K562 (cell line): ENCODE measurements at regions of chr2 and their contacts with region 1.

Region 1: GRCh38 chr2:229921892-229922445 is at the start of gene TRIP12:
- DNase-seq: peak; percentile 79 to 89 (median 86)
- ATAC-seq: peak; percentile 81
- H3K4me3 ChIP-seq: peak within 1 kb of the TSS; percentile 90
- H3K27ac ChIP-seq: peak within 1 kb of the TSS; percentile 90
- H3K4me1 ChIP-seq: peaks cover 0 to 9% of the 10 kb centered on the region in 2 experiments; a peak in 2 of 5 replicates
- H3K27me3 ChIP-seq: no peaks in the 10 kb centered on the region
- CTCF ChIP-seq: no peak
- EP300 ChIP-seq: no peak
- POLR2A ChIP-seq: no peak
- RAD21 ChIP-seq: no peak
- polyA plus RNA-seq, gene TRIP12: 15.2 to 26.5 TPM

Region 2: DNA sequence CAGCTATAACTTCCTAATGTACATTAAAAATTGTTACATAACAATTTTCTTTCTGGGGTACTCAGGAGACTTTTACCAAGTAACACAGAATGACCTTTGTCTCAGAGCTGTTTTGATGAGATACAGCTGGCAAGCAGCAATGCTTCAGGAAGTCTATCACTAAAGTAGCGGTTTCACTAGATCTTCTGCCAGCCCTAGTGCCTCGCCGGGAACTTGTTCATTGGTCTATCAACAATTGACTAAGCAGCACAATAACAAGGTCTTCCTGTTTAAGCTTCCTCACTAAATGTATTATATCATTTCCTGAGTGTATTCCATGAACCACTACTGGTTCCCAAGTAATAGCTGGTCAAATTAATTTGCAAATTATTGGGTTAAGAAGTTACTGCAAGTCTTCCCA is 69.4 kb before region 1 on chr2:
- CTCF ChIA-PET with region 1: no interaction called
- POLR2A ChIA-PET with region 1: no interaction called
- in situ Hi-C with region 1: no loop called
- intact Hi-C with region 1: loop called (anchors 5 kb)
- DNase-seq: peak in 3 of 4 experiments; percentile 8 to 32 (median 13)
- ATAC-seq: peak; percentile 69
- H3K4me3 ChIP-seq: no peak overlapping the region
- H3K27ac ChIP-seq: peak overlapping the region; percentile 23
- H3K4me1 ChIP-seq: peaks cover 3 to 8% of the 10 kb centered on the region in 2 experiments; a peak in 4 of 5 replicates
- H3K27me3 ChIP-seq: no peaks in the 10 kb centered on the region
- CTCF ChIP-seq: no peak
- EP300 ChIP-seq: no peak
- POLR2A ChIP-seq: no peak
- RAD21 ChIP-seq: no peak

Region 3: GRCh38 chr2:229974266-229974665 is 52.3 kb after region 1 on chr2:
- CTCF ChIA-PET with region 1: no interaction called
- POLR2A ChIA-PET with region 1: no interaction called
- in situ Hi-C with region 1: no loop called
- intact Hi-C with region 1: loop called (anchors 5 kb)
- DNase-seq: peak in 1 of 4 experiments; percentile 15
- ATAC-seq: peak; percentile 68
- H3K4me3 ChIP-seq: no peak overlapping the region
- H3K27ac ChIP-seq: no peak overlapping the region
- H3K4me1 ChIP-seq: no peaks in the 10 kb centered on the region; a peak in 1 of 5 replicates
- H3K27me3 ChIP-seq: no peaks in the 10 kb centered on the region
- CTCF ChIP-seq: 0 out of 6 replicates have a peak, but pooled peaks of 1 of the 3 experiments have one; percentile 13
- EP300 ChIP-seq: no peak
- POLR2A ChIP-seq: no peak
- RAD21 ChIP-seq: no peak

Region 4: GRCh38 chr2:230000118-230000841 is 78.3 kb after region 1 on chr2:
- CTCF ChIA-PET with region 1: no interaction called
- POLR2A ChIA-PET with region 1: no interaction called
- in situ Hi-C with region 1: no loop called
- intact Hi-C with region 1: no loop called
- DNase-seq: no peak
- ATAC-seq: no peak
- H3K4me3 ChIP-seq: no peak overlapping the region
- H3K27ac ChIP-seq: no peak overlapping the region
- H3K4me1 ChIP-seq: no peaks in the 10 kb centered on the region
- H3K27me3 ChIP-seq: no peaks in the 10 kb centered on the region
- CTCF ChIP-seq: no peak
- EP300 ChIP-seq: no peak
- POLR2A ChIP-seq: no peak
- RAD21 ChIP-seq: no peak